ENCODE measurements at regions of chr17 and their contacts with region 1.

Region 1: GRCh38 chr17:43393944-43394482 is 4.8 kb upstream of the ARL4D start:
- DNase-seq: peak; percentile 93
- H3K4me3 ChIP-seq: no peak overlapping the region
- H3K27ac ChIP-seq: peak overlapping the region; percentile 19 to 31
- H3K4me1 ChIP-seq: no peaks in the 10 kb centered on the region
- H3K27me3 ChIP-seq: no peaks in the 10 kb centered on the region
- CTCF ChIP-seq: peak; percentile 90 to 99 (median 98)
- POLR2A ChIP-seq: no peak

Region 2: GRCh38 chr17:43418441-43419374 is 24.7 kb after region 1 on chr17:
- intact Hi-C with region 1: loop called (anchors 2 kb)
- DNase-seq: peak; percentile 59
- H3K4me3 ChIP-seq: no peak overlapping the region
- H3K27ac ChIP-seq: peak overlapping the region; percentile 39 to 59
- H3K4me1 ChIP-seq: no peaks in the 10 kb centered on the region
- H3K27me3 ChIP-seq: no peaks in the 10 kb centered on the region
- CTCF ChIP-seq: no peak
- POLR2A ChIP-seq: peak; percentile 31

Region 3: DNA sequence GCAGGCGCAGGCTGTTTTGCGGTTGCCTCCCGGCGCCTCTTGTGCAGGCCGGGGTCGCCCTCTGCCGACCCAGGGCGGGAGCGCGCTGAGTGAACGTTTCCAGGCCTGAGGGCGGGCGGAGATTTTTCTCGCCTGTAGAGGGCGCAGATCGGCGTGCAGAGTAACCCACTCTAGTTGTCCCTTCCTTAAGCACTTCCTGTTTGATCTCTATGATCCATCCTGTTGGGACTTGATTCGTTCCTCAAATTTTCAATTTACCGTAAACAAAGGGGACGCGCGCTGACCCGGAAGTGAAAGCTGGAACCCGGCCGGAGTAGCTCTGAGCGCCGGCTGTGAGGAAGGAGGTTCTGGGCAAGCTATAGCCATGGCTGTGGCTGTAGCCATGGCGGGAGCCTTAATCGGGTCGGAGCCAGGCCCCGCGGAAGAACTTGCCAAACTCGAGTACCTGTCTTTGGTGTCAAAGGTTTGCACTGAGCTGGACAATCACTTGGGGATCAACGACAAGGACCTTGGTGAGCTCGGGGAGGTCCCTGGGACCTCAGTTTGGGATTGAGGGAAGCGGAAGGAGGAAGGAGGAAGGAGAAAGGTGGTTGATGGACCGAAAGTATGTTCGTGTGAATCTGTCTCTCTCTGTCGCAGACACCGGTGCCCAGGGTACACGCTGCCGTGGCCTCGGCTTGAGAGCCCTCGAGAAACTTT is 89.8 kb after region 1 on chr17 and contains the start of gene DHX8:
- intact Hi-C with region 1: loop called (anchors 1 kb)
- DNase-seq: peak; percentile 95
- H3K4me3 ChIP-seq: peak within 1 kb of the TSS; percentile 54 to 70
- H3K27ac ChIP-seq: peak within 1 kb of the TSS; percentile 76 to 81
- H3K4me1 ChIP-seq: peaks cover 7% of the 10 kb centered on the region
- H3K27me3 ChIP-seq: no peaks in the 10 kb centered on the region
- CTCF ChIP-seq: peak; percentile 99 to 100 (median 100)
- POLR2A ChIP-seq: peak; percentile 49
- total RNA-seq, gene DHX8: 35.7 to 52.9 TPM

Measured in prostate gland (tissue), 2 donors.